Natural killer cell (primary cell): ENCODE measurements at regions of chr9 and their contacts with region 1.

Region 1: DNA sequence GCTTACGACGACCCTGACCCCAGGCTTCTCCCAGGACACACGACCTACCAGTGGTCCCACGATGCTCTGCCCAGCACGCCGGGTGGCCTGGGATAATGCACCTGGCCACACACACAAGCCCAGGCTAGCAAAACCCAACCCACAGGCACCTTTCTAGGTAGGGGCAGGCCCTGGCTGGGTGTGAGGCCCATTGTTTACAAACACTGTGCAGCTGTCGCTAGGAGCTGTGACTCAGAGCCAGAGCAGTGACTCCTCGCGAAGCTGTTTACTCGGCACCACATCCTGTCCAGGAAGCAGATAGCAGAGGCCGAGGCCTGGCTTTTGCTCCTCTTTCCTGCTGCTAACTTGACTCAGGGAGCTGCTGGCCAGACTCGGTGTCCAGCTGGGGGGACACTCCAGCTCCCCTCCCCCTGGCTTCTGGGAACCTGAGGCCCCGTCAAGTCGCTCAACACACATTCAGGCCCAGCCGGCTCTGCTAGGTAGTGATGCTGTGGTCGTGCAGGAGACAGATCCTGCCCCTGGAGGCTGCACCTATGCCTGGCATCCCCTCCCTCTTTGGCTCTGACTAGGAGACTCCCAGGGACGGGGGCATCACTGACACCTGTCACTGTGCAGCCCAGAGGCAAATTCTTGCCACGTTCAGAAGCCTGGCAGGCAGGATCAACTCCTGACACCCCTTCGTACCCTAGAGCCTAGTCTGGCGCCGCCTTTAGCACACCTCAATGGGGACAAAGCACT is 12.8 kb upstream of the RALGDS start:
- DNase-seq: peak; percentile 85 to 97
- ATAC-seq: peak; percentile 66 to 91 (median 82)
- H3K4me3 ChIP-seq: no peak overlapping the region
- H3K4me3 Mint-ChIP-seq: peak overlapping the region; percentile 87
- H3K27ac ChIP-seq: peak overlapping the region; percentile 99
- H3K27ac Mint-ChIP-seq: peak overlapping the region; percentile 75 to 93
- H3K4me1 ChIP-seq: peaks cover 82% of the 10 kb centered on the region
- H3K4me1 Mint-ChIP-seq: peaks cover 58 to 73% of the 10 kb centered on the region in 2 donors
- H3K27me3 ChIP-seq: no peaks in the 10 kb centered on the region
- H3K27me3 Mint-ChIP-seq: no peaks in the 10 kb centered on the region
- CTCF ChIP-seq: no peak

Region 2: DNA sequence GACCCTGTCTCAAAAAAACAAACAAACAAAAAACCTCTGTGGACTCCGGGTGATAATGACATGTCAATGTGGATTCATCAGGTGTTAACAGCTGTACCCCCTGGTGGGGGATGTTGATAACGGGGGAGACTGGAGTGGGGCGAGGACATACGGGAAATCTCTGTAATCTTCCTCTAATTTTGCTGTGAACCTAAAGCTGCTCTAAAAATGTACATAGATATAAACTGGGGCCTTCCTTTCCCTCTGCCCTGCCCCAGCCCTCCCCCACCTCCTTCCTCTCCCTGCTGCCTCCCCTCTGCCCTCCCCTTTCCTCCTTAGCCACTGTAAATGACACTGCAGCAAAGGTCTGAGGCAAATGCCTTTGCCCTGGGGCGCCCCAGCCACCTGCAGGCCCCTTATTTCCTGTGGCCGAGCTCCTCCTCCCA is 73.4 kb before region 1 on chr9:
- intact Hi-C with region 1: no loop called
- DNase-seq: peak in 1 of 2 donors; percentile 32
- ATAC-seq: peak; percentile 37 to 44 (median 42)
- H3K4me3 ChIP-seq: no peak overlapping the region
- H3K4me3 Mint-ChIP-seq: no peak overlapping the region
- H3K27ac ChIP-seq: no peak overlapping the region
- H3K27ac Mint-ChIP-seq: no peak overlapping the region
- H3K4me1 ChIP-seq: peaks cover 24% of the 10 kb centered on the region
- H3K4me1 Mint-ChIP-seq: peaks cover 25 to 34% of the 10 kb centered on the region in 2 donors
- H3K27me3 ChIP-seq: no peaks in the 10 kb centered on the region
- H3K27me3 Mint-ChIP-seq: no peaks in the 10 kb centered on the region
- CTCF ChIP-seq: no peak

Region 3: DNA sequence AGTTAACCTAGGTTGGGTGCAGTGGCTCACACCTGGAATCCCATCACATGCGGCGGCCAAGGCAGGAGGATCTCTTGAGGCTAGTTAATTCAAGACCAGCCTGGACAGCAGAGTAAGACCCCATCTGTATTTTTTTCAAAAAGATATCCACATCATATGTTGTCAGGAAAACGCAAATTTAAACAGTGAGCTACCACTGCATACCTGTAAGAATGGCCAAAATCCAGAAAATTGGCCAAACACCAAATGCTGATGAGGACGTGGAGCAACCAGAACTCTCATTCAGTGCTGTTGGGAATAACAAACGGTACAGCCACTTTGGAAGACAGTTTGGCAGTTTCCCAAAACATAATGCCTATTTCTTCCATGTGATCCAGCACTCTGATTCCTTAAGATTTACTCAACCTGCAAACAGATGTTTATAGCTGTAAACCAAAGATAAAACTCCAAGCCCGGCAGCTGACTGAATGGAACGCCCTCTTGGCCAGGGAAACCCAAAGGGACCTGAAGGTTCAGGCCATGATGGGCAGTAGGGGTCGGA is 59.7 kb before region 1 on chr9:
- intact Hi-C with region 1: no loop called
- DNase-seq: no peak
- ATAC-seq: no peak
- H3K4me3 ChIP-seq: no peak overlapping the region
- H3K4me3 Mint-ChIP-seq: no peak overlapping the region
- H3K27ac ChIP-seq: no peak overlapping the region
- H3K27ac Mint-ChIP-seq: no peak overlapping the region
- H3K4me1 ChIP-seq: no peaks in the 10 kb centered on the region
- H3K4me1 Mint-ChIP-seq: no peaks in the 10 kb centered on the region
- H3K27me3 ChIP-seq: no peaks in the 10 kb centered on the region
- H3K27me3 Mint-ChIP-seq: no peaks in the 10 kb centered on the region
- CTCF ChIP-seq: no peak

Region 4: GRCh38 chr9:133113949-133114885 is 19.6 kb before region 1 on chr9:
- intact Hi-C with region 1: loop called (anchors 1 kb)
- DNase-seq: peak in 1 of 2 donors; percentile 37
- ATAC-seq: peak; percentile 3 to 11 (median 4)
- H3K4me3 ChIP-seq: no peak overlapping the region
- H3K4me3 Mint-ChIP-seq: peak overlapping the region; percentile 80
- H3K27ac ChIP-seq: peak overlapping the region; percentile 81
- H3K27ac Mint-ChIP-seq: peak overlapping the region; percentile 94 to 97
- H3K4me1 ChIP-seq: peaks cover 74% of the 10 kb centered on the region
- H3K4me1 Mint-ChIP-seq: peaks cover 57 to 66% of the 10 kb centered on the region in 2 donors
- H3K27me3 ChIP-seq: no peaks in the 10 kb centered on the region
- H3K27me3 Mint-ChIP-seq: no peaks in the 10 kb centered on the region
- CTCF ChIP-seq: no peak